Lower leg skin (tissue), 4 donors: ENCODE measurements at regions of chr2 and their contacts with region 1.

Region 1: GRCh38 chr2:176638167-176639015 is 369.1 kb downstream of the MTX2 start:
- DNase-seq: peak; percentile 55 to 92
- H3K4me3 ChIP-seq: peak overlapping the region; percentile 50
- CTCF ChIP-seq: no peak
- POLR2A ChIP-seq: no peak

Region 2: DNA sequence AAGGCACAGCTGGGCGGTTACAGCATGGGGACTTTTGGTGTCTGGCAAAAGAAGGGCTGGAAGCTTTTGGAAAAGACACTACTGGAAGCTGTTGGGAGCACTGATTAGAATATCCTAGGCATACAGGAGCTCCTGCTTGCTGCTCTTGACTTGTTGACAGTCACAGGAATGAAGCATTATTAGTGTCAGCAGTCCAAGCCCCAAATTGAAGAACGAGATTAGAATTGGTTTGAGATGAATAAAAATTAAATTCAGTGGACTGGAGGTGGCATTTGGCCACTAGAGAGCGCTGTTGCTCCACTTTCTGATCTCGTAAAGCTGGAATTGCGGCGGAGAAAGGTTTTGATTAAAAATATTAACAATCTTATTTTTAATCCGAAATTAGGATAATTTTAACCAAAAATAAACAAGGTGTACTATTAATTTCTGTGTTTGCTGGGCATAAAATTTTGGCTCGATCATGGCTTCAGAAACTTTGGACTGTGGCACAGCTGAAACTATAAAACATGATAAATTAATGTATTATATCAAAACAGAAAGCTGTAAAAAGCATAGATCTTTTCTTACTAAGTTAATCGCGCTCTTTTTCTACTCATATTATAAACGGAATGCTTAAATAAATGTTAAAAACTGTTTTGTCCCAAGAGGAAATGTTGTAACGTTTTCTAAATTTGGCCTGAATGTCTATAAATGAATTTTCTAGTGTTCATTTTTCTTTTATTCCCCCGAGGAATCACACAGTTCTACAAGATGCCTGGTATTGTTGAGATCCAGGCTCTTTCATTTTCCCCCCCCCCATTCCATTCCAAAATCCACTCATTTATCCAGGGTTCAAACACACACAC is 511.2 kb before region 1 on chr2:
- intact Hi-C with region 1: loop called (anchors 5 kb)
- DNase-seq: peak; percentile 63 to 95
- H3K4me3 ChIP-seq: no peak overlapping the region
- CTCF ChIP-seq: peak in 2 of 3 donors; percentile 3 to 61
- POLR2A ChIP-seq: no peak

Region 3: GRCh38 chr2:176136374-176137251 is 501.8 kb before region 1 on chr2:
- intact Hi-C with region 1: loop called (anchors 5 kb)
- DNase-seq: peak in 1 of 2 donors; percentile 87
- H3K4me3 ChIP-seq: peak overlapping the region; percentile 34
- CTCF ChIP-seq: no peak
- POLR2A ChIP-seq: no peak